A673 (cell line): ENCODE measurements at regions of chr2 and their contacts with region 1.

Region 1: GRCh38 chr2:181742922-181743722 is 62.8 kb upstream of the NEUROD1 start:
- DNase-seq: peak; percentile 83
- H3K4me3 ChIP-seq: no peak overlapping the region
- H3K27ac ChIP-seq: peak overlapping the region; percentile 22
- H3K4me1 ChIP-seq: peaks cover 24% of the 10 kb centered on the region
- H3K27me3 ChIP-seq: no peaks in the 10 kb centered on the region
- CTCF ChIP-seq: peak; percentile 86

Region 2: DNA sequence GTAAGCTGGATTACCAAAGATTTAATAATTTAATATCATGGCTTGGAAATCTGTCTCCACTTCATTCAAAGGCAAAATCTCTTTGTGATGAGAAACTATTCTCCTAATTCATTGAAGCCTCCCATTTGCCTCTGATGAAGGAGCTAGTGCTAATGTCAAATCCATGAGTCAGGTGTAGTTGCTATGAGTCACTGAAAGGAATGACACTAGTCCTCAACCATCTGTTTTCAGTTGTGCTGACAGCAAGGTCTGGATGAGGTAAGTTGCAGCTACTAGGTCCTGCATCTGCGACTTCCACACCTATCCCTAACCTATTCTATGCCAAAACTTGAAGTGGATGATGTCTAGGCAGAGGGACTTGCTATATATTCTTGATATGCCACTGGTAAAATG is 1086.7 kb before region 1 on chr2:
- CTCF ChIA-PET with region 1: no interaction called
- POLR2A ChIA-PET with region 1: no interaction called
- intact Hi-C with region 1: no loop called
- DNase-seq: no peak
- H3K4me3 ChIP-seq: no peak overlapping the region
- H3K27ac ChIP-seq: no peak overlapping the region
- H3K4me1 ChIP-seq: no peaks in the 10 kb centered on the region
- H3K27me3 ChIP-seq: no peaks in the 10 kb centered on the region
- CTCF ChIP-seq: no peak

Region 3: GRCh38 chr2:180962791-180963190 is 780.3 kb before region 1 on chr2:
- CTCF ChIA-PET with region 1: no interaction called
- POLR2A ChIA-PET with region 1: no interaction called
- intact Hi-C with region 1: no loop called
- DNase-seq: no peak
- H3K4me3 ChIP-seq: no peak overlapping the region
- H3K27ac ChIP-seq: no peak overlapping the region
- H3K4me1 ChIP-seq: no peaks in the 10 kb centered on the region
- H3K27me3 ChIP-seq: no peaks in the 10 kb centered on the region
- CTCF ChIP-seq: no peak

Region 4: GRCh38 chr2:181779288-181780021 is 36.3 kb after region 1 on chr2:
- CTCF ChIA-PET with region 1: interaction called, 3 read pairs
- POLR2A ChIA-PET with region 1: no interaction called
- intact Hi-C with region 1: loop called (anchors 2 kb)
- DNase-seq: peak; percentile 99
- H3K4me3 ChIP-seq: peak overlapping the region; percentile 3
- H3K27ac ChIP-seq: peak overlapping the region; percentile 98
- H3K4me1 ChIP-seq: peaks cover 67% of the 10 kb centered on the region
- H3K27me3 ChIP-seq: no peaks in the 10 kb centered on the region
- CTCF ChIP-seq: no peak

Region 5: DNA sequence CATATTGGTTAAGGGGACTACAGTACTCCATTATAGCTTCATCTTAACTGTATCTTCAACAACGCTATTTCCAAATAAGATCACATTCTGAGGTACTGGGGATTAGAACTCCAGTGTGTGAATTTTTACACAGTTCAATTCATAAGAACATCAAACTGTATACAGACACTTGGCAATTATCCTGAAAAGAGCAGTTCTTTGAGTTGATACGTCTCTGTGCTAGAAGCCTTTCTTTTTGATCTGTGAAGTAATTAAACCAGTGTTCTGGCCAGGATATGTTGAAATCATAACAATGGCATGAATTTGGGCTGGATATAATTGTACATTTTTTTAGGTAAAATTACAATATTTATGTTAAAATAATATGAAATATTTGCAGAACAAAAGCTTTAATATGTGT is 54.9 kb after region 1 on chr2:
- CTCF ChIA-PET with region 1: no interaction called
- POLR2A ChIA-PET with region 1: no interaction called
- intact Hi-C with region 1: no loop called
- DNase-seq: no peak
- H3K4me3 ChIP-seq: no peak overlapping the region
- H3K27ac ChIP-seq: no peak overlapping the region
- H3K4me1 ChIP-seq: no peaks in the 10 kb centered on the region
- H3K27me3 ChIP-seq: no peaks in the 10 kb centered on the region
- CTCF ChIP-seq: no peak

Region 6: GRCh38 chr2:181904022-181904632 is 161.0 kb after region 1 on chr2:
- CTCF ChIA-PET with region 1: interaction called, 7 read pairs
- POLR2A ChIA-PET with region 1: no interaction called
- intact Hi-C with region 1: loop called (anchors 1 kb)
- DNase-seq: peak; percentile 76
- H3K4me3 ChIP-seq: no peak overlapping the region
- H3K27ac ChIP-seq: peak overlapping the region; percentile 51
- H3K4me1 ChIP-seq: peaks cover 31% of the 10 kb centered on the region
- H3K27me3 ChIP-seq: no peaks in the 10 kb centered on the region
- CTCF ChIP-seq: peak; percentile 82

Region 7: GRCh38 chr2:181953881-181954537 is 210.9 kb after region 1 on chr2:
- CTCF ChIA-PET with region 1: interaction called, 8 read pairs
- POLR2A ChIA-PET with region 1: no interaction called
- intact Hi-C with region 1: loop called (anchors 2 kb)
- DNase-seq: peak; percentile 89
- H3K4me3 ChIP-seq: peak overlapping the region; percentile 44
- H3K27ac ChIP-seq: peak overlapping the region; percentile 27
- H3K4me1 ChIP-seq: peaks cover 16% of the 10 kb centered on the region
- H3K27me3 ChIP-seq: no peaks in the 10 kb centered on the region
- CTCF ChIP-seq: peak; percentile 83

Region 8: DNA sequence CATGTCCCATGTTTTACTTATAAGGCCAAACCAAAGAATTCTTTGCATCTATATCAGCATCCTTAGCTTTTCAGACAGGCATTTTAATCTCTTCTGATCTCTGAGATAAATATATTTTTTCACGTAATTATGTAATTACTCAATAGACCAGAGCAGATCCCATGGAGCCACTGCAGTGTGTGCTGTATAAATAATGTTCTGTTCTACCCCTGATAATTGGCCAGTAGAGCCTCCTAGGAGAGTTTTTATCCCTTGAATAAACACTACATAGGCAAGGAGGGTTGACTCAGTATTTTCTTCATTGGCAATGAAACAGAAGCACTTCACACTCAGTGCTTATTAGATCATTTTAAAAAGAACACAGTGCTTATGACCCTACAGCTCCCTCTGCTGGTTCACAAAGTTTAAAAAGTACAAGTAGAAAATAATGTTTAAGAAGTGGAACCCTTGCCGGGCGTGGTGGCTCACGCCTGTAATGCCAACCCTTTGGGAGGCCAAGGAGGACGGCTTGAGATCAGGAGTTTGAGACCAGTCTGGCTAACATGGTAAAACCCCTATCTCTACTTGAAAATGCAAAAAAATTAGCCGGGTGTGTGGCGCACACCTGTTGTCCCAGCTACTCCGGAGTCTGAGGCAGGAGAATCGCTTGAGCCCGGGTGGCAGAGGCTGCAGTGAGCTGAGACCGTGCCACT is 334.5 kb after region 1 on chr2:
- CTCF ChIA-PET with region 1: interaction called, 3 read pairs
- POLR2A ChIA-PET with region 1: no interaction called
- intact Hi-C with region 1: loop called (anchors 1 kb)
- DNase-seq: peak; percentile 93
- H3K4me3 ChIP-seq: no peak overlapping the region
- H3K27ac ChIP-seq: no peak overlapping the region
- H3K4me1 ChIP-seq: peaks cover 19% of the 10 kb centered on the region
- H3K27me3 ChIP-seq: no peaks in the 10 kb centered on the region
- CTCF ChIP-seq: peak; percentile 72